ENCODE measurements at regions of chr1 and their contacts with region 1.

Region 1: DNA sequence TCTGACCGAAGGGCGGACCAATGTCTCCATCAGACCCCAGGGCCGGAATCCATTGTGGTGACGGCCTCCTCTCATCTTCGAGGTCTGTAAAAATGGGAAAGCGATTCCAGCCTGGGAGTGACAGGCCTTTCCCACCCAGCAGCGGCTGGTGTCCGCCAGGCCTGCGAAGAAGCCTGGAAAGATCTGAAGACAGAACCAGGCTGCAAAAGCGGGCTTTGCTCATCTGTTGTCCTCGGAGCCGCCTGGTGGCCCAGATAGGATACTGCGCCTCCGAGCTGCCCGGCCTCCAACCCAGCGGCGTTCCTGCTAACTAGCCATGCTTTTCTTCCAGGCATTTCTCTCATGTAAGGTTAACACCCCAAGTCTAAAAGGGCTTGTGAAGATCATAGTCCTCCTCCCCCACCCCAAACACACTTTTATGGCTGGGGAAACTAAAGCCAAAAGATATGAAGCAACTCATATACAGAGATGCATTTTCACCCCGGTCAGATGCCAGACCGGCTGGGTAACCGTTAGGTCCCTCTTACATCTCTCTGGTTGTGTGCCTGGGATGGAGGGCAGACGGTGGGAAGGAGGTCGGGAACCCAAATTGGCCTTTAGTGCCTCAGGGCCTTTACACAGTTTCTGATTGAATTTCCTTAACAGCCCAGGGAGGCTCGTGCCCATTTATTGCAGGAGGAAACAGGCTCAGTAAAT is 1.9 kb upstream of the DHRS3 start:
- DNase-seq: peak; percentile 78 to 98 (median 87)

Region 2: GRCh38 chr1:12215118-12215961 is 404.6 kb before region 1 on chr1:
- intact Hi-C with region 1: no loop called
- DNase-seq: no peak

Region 3: DNA sequence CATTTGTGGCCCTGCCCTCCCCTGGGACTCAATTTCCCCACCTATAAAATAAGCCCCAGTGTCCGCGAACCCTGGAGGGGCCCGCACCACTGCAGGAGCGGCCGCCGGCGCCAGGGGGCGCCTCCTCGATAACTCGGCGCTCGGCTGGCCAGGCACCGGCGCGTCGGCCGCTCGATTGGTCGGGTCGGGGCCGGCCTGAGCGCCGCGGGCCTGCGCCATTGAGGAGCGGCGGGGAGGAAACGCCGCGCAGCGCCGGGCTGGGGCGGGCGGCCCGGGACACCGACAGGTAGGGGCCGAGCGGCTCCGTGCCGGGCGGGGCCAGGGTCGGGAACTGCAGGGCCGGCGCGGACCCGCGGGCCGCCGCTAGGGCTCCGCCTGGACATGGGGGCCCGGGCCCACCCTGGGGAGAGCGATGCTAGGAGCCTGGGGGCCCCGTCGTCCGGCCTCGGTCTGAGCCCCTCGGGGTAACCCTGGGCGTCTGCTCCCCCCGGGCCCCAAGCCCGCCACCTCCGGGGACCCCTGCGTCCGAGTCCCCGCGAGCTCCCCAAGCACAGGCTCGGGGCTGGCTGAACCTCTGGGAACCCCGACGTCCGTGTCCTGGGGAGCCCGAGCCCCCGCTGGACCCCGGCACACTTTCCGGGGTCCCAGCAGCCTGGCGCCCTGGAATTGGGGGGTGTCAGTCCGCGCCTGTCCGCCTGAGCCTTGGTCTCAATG is 389.9 kb before region 1 on chr1 and contains the start of gene VPS13D:
- intact Hi-C with region 1: loop called (anchors 1 kb)
- DNase-seq: peak; percentile 64 to 96 (median 78)

Region 4: GRCh38 chr1:12314333-12314903 is 305.5 kb before region 1 on chr1:
- intact Hi-C with region 1: loop called (anchors 5 kb)
- DNase-seq: no peak

Region 5: DNA sequence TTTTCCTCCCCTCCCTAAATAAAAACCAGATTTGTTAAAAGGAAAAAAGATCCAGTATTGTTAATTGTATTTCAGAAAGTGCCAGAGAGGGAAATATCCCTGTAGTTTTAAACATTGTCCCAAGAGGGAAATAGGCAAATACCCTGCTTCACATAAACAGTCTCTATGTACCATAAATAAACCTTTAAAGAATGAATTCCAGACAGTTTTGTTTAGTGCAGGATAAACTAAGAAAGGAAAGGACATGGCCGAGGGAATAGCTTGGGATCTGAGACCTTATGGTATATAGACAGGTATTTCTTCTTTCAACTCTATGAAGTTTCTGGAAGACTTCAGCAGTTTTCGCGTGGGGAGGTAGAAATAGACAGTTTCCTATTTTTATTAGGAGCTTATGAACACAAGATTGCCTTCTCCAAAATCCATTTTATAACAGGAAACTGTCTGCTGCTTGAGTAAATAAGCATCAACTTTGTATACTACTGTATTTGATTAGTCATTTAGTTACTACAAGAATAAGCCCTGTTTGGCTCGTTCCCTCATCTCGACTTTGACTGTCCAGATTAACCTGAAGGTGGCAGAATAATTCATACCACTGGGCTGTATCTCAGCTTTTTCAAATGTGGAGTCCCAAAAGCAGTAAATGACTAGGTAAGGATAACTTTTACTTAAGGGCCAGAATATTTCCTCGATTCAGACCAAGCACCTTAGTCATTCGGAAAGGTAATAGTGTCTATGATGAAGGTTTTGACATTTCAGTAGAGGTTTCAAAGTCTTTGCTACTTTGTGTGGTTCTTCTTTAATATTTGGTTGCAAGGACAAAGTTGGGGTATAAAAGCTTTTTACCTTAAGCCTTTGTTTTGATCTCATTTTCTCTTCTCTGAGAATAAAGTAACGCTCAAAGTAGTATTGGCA is 212.6 kb before region 1 on chr1:
- intact Hi-C with region 1: loop called (anchors 2 kb)
- DNase-seq: no peak

Region 6: GRCh38 chr1:12518931-12519692 is 100.8 kb before region 1 on chr1:
- intact Hi-C with region 1: loop called (anchors 5 kb)
- DNase-seq: peak in 6 of 10 donors; percentile 25 to 90 (median 71)

Region 7: DNA sequence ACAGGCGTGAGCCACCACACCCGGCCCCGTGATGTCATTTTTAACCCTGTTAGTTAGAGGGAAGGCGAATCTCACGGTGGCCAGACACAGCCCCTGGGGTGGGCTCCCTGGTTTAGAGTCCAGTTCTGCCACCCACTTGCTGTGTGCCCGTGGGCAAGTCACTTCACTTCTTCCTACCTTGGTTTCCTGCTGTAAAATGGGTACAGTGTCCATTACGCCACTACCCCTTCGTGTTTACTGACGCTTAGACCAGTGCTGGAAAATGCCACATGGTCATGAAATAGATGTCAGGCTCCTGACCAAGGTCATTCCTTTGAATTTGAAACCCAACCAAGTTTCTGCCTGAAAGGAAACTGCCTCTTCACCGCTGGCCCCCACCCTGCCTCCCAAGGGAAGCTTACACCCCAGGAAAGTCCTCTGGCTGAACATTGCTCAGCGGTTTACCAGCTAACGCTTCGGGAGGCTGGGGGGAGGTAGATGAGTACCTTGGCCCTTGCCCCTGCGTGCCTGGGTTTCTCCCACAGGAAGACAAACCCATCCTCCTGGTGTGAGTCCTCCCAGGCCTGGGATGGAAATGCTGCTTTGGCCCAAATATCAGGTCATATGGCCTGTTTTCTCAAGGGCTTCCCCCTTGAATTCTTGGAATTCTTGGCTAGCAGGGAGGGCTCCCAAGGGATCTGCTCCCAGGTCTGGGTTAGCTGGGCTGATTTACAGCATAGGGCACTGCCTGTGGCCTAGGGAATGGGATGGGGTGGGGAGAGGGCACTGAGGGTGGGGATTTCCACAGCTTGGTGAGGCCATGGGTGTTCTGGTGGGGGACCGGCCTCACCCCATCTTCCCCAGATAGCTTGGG is 16.4 kb after region 1 on chr1:
- intact Hi-C with region 1: no loop called
- DNase-seq: peak in 2 of 10 donors; percentile 63 to 74

Measured in posterior cingulate gyrus (tissue), 11 donors.